GM13976 (cell line): ENCODE measurements at regions of chr3 and their contacts with region 1.

Region 1: DNA sequence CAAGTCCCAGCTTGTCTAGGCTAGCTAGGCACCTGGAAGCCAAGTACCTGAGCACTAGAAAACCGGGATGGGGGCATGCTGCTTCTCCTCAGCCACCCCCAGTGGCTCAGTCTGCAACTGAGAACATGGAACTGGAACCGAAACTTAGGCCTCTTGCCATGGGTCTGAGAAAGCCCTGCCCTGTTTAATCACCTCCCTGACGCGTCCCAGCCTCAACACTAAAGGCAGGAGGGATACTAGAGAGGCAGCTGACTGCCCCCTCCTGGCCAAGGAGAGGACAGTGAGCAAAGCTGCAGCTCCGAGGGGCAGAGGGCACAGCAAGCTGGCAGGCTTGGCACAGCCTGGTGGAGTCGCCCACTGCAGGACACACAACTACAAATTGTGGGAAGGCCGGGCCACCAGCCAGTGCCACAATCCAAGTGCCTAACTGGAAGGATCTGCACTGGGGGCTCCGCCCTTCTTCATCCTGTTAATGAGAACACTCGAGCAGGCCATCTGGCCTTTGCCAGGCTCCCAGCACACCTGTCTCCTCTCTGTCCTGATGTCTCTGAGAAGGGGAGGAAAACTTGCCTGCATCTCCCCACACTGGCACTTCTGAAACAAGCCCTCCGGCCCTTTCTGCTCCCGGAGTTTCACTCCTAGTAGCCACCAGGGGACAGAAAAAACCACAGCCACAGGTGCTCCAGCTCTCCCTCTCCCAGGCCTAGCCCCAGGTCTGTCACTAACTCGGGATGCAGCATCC is 53.7 kb downstream of the BDH1 start:
- DNase-seq: peak; percentile 79
- CTCF ChIP-seq: peak; percentile 49

Region 2: DNA sequence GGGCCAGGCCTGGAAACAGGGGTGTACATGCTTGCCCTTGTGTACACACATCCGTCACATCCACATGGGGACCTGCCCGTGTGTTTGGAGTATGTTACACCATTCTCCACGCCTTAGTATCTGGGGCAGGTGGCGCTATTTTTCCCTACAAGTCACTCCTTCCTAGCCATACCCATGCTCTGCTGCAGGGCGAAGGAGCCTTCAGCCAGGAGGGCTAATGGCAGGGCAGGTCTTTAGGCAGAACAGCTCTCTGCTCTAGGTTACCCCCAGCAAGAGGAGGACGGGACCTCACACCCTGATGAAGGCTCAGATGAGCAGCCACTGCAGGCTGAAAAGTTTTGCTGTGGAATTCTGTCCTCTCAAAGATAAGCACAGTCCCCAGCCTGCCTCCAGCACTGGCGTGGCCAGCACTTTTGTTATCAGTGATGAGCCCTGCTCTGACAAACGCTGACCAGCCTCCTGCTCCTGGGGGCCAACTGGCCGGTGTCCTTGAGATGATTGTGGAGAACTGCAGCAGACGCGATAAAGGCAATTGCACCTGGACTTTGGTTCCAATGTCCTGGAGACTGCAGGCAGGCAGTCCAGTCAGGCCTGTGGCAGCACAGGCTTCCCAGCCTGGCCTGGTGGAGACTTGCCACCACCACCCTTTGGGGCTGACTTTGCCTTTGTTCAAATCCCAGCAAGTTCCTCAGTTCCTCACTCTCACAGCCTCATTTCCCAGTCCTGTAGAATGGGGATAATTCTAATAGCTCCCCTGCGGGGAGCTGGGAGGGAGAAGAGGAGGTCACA is 513.6 kb before region 1 on chr3:
- in situ Hi-C with region 1: loop called (anchors 25 kb)
- DNase-seq: no peak
- CTCF ChIP-seq: no peak

Region 3: DNA sequence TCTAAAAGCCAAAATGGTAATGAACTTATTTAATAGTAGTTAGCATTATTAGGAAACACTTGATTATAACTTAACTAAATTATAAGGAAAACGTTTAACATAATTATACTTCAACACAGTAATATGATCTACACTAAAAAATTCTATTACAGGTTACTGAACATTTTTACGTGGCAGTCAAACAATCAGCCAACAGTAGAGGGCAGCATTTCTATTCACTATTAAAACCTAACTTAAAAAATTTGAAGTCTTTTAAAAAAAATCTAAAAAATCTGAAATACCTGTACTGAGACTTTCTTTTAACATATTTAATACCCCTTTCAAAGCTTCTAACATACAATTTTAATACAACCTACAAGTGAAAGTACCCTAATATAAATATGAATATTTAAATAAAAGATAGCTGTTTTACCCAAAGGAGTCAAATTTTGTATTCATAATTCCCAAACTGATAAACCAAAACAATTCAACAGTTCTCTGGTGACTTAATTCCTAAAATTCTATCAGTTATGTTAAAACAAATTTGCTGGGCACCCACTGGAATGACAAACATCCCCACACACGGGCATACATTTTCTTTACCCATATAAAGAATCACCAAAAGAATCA is 245.1 kb before region 1 on chr3:
- in situ Hi-C with region 1: loop called (anchors 25 kb)
- DNase-seq: peak; percentile 12
- CTCF ChIP-seq: peak; percentile 24